Mammary epithelial cell (primary cell): ENCODE measurements at regions of chr13 and their contacts with region 1.

Region 1: DNA sequence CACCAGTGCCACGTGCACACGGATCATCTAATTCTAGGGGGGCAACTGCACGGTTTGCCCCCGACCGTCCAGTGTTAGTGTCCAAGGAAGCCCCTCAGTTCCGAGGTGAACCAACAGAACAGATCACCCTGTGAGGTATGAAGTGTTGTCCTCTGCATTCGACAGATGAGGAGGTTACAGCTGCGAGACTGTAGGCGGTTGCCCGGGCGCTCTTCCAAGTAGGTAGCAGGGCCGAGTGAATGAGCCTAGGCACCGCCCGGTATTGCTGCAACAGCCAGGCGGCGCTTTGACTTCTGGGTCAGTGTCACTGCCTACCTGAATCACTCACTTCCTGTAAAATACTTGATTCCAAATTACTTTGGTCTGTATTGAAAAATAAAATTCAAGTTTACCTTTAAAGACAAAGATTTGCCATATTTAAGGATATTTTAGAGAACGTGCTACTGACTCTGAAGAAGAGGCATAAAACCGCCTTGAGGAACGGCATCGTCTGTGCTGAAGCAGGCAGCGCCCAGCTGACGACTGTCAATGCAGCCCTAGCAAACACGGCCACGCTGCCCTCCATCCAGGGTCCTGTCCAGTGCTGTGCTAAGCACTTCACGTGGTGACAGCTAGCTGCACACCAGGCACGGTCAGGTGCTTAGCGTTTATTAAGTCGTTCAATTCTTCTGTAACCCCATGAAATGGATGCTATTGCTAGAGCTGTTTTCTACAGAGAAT is 19.3 kb upstream of the RASA3 start:
- DNase-seq: peak; percentile 88
- H3K4me3 ChIP-seq: no peak overlapping the region
- H3K27ac ChIP-seq: no peak overlapping the region
- H3K4me1 ChIP-seq: peaks cover 14% of the 10 kb centered on the region
- H3K27me3 ChIP-seq: no peaks in the 10 kb centered on the region
- CTCF ChIP-seq: peak in 1 of 2 donors; percentile 37

Region 2: DNA sequence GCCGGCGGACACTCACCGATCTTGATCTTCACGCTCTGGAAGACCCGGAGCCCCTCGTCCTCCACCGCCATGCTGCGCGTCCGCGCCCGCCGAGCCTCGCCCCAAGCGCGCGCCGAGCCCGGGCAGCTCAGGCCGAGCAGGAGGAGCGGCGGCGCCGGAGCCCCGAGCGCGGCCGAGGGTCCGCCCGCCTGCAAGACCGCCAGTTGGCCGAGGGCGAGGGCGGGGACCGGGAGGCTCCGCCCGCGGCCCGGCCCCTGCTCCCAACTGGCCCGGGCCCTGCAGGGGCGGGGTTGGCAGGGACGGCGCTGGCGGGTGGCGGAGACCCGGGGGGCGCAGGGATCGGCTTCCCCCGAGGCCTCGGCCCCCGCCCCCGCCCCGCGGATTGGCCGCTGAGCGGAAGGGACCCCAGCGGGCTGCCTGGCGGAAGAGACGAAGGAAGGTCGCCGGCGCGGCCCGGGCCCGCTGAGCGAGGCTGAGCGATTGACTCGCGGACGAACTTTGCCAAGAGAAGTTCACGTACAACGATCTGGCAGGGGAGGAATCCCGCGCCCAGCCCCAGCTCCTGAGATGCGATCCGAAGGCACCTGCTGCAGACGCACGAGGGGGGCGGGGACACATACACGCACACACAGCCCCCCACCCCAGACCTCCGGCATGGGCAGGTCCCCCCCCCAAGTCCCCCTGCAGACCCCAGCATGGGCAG is 19.2 kb before region 1 on chr13 and contains the start of gene RASA3:
- CTCF ChIA-PET with region 1: no interaction called
- dilution Hi-C with region 1: no loop called
- in situ Hi-C with region 1: no loop called
- intact Hi-C with region 1: loop called (anchors 2 kb)
- DNase-seq: peak; percentile 71
- H3K4me3 ChIP-seq: peak within 1 kb of the TSS; percentile 33 to 64 (median 50)
- H3K27ac ChIP-seq: no peak within 1 kb of the TSS
- H3K4me1 ChIP-seq: peaks cover 16% of the 10 kb centered on the region
- H3K27me3 ChIP-seq: no peaks in the 10 kb centered on the region
- CTCF ChIP-seq: no peak
- total RNA-seq, gene RASA3: 5.2 to 8.4 TPM